BJ (cell line): ENCODE measurements at regions of chr17 and their contacts with region 1.

Region 1: GRCh38 chr17:16449121-16449570 is 33.8 kb downstream of the TRPV2 start:
- DNase-seq: no peak
- H3K4me3 ChIP-seq: no peak overlapping the region
- H3K27me3 ChIP-seq: no peaks in the 10 kb centered on the region
- CTCF ChIP-seq: no peak

Region 2: GRCh38 chr17:16363749-16364536 is 85.2 kb before region 1 on chr17:
- CTCF ChIA-PET with region 1: interaction called, 45 read pairs
- POLR2A ChIA-PET with region 1: no interaction called
- DNase-seq: no peak
- H3K4me3 ChIP-seq: no peak overlapping the region
- H3K27me3 ChIP-seq: no peaks in the 10 kb centered on the region
- CTCF ChIP-seq: peak; percentile 95

Region 3: DNA sequence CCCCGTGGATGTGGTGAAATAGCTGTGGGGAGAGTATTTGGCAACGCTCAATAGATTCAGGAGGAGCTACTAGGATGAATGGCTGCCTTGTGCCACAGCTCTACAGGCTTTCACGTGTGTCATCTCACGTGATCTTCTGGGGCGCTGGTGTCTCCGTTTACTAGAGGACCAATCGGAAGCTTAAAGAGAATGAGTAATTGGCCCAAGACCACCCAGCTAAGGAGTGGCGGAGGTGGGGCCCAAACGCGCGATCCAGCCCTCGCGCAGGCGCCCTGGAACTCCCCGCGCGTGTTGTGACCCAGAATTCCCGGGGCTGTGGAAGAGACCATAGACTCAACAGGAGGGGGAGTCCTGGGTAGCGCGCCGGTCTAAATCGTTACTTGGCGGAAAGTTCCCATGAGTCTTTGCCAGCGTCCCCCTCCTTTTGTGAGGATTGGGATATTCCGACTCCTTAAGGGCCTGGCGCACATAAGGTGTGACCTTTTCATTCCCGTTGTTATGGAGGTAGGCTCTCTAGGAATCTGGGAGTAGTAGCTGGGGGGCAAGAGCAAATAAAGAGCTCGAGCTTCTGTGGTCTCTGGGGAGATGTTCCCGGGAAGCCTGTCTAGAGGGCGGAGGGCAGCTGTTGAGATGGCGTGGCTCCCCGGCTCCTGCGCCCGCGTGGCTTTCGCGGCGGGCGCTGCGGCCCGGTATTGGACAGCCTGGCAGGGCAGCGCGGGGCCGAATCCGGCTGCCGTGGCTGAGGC is 10.4 kb before region 1 on chr17:
- CTCF ChIA-PET with region 1: interaction called, 46 read pairs
- POLR2A ChIA-PET with region 1: interaction called, 5 read pairs
- DNase-seq: peak; percentile 99
- H3K4me3 ChIP-seq: peak overlapping the region; percentile 94
- H3K27me3 ChIP-seq: no peaks in the 10 kb centered on the region
- CTCF ChIP-seq: no peak

Region 4: GRCh38 chr17:16473649-16474367 is 24.7 kb after region 1 on chr17:
- CTCF ChIA-PET with region 1: interaction called, 15 read pairs
- POLR2A ChIA-PET with region 1: no interaction called
- DNase-seq: no peak
- H3K4me3 ChIP-seq: no peak overlapping the region
- H3K27me3 ChIP-seq: no peaks in the 10 kb centered on the region
- CTCF ChIP-seq: no peak

Region 5: DNA sequence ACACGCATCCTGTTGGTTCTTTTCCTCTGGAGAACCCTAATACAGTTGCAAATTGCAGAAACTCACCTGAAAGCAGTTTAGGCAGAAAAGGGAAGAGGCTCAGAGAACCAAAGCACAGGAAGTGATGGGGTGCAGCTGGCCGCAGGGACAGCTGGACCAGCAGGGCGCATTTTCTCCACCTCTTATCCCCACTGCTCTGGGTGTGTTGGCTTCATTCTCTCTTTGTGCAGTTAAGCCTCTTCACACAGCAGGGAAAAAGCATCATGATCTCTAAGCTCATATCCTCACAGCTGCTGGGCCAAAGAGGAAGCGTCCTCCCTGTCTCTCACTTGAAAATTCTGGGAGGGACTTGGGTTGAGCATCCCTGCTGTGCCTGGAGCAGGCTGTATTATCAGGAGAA is 62.9 kb after region 1 on chr17:
- CTCF ChIA-PET with region 1: interaction called, 264 read pairs
- POLR2A ChIA-PET with region 1: no interaction called
- DNase-seq: no peak
- H3K4me3 ChIP-seq: no peak overlapping the region
- H3K27me3 ChIP-seq: peaks cover 5% of the 10 kb centered on the region
- CTCF ChIP-seq: no peak

Region 6: GRCh38 chr17:16529906-16530305 is 80.8 kb after region 1 on chr17:
- CTCF ChIA-PET with region 1: interaction called, 264 read pairs
- POLR2A ChIA-PET with region 1: no interaction called
- DNase-seq: no peak
- H3K4me3 ChIP-seq: no peak overlapping the region
- H3K27me3 ChIP-seq: peaks cover 19% of the 10 kb centered on the region
- CTCF ChIP-seq: no peak